ENCODE measurements at regions of chr17 and their contacts with region 1.

Region 1: GRCh38 chr17:8745586-8746500 is 1.2 kb upstream of the CCDC42 start:
- DNase-seq: peak; percentile 70
- H3K4me3 ChIP-seq: peak overlapping the region; percentile 35 to 63 (median 56)
- H3K27ac ChIP-seq: peak overlapping the region; percentile 36 to 58 (median 52)
- H3K4me1 ChIP-seq: peaks cover 0 to 17% (median 8%) of the 10 kb centered on the region in 4 donors
- H3K27me3 ChIP-seq: no peaks in the 10 kb centered on the region
- CTCF ChIP-seq: peak; percentile 72 to 98 (median 95)
- EP300 ChIP-seq: no peak
- POLR2A ChIP-seq: no peak

Region 2: GRCh38 chr17:8409966-8410864 is 335.6 kb before region 1 on chr17:
- in situ Hi-C with region 1: loop called (anchors 5 to 25 kb)
- intact Hi-C with region 1: loop called (anchors 5 kb)
- DNase-seq: peak; percentile 91
- H3K4me3 ChIP-seq: no peak overlapping the region
- H3K27ac ChIP-seq: no peak overlapping the region
- H3K4me1 ChIP-seq: peaks cover 0 to 7% (median 2%) of the 10 kb centered on the region in 4 donors
- H3K27me3 ChIP-seq: peaks cover under 1% of the 10 kb centered on the region
- CTCF ChIP-seq: peak; percentile 84 to 87 (median 86)
- EP300 ChIP-seq: no peak
- POLR2A ChIP-seq: no peak

Region 3: DNA sequence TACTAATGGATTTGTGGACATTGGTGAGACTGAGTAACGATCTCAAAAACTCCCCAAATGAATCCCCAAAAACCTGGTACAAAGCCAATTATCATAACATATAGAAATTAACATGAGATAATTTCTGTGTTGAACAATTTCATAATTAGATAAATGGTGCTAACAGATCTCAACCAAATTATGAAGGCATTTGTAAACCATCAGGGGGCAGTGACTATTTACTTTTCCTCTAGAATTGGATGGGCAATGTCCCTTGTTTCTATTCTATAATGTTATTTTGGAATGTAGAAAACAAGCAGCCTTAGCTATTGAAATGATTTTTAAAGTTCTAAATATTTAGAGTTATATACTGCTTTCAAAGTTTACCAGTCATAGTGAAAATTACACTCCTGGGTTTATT is 173.1 kb before region 1 on chr17:
- in situ Hi-C with region 1: loop called in 1 of 4 experiments (anchors 10 kb)
- intact Hi-C with region 1: no loop called
- DNase-seq: no peak
- H3K4me3 ChIP-seq: no peak overlapping the region
- H3K27ac ChIP-seq: no peak overlapping the region
- H3K4me1 ChIP-seq: no peaks in the 10 kb centered on the region
- H3K27me3 ChIP-seq: no peaks in the 10 kb centered on the region
- CTCF ChIP-seq: peak in 2 of 5 experiments; percentile 10 to 14
- EP300 ChIP-seq: no peak
- POLR2A ChIP-seq: no peak

Region 4: GRCh38 chr17:8698162-8699061 is 47.4 kb before region 1 on chr17:
- in situ Hi-C with region 1: no loop called
- intact Hi-C with region 1: no loop called
- DNase-seq: peak; percentile 15
- H3K4me3 ChIP-seq: peak overlapping the region in 1 of 4 donors; percentile 24
- H3K27ac ChIP-seq: peak overlapping the region; percentile 16 to 52 (median 16)
- H3K4me1 ChIP-seq: peaks cover 0 to 5% (median 4%) of the 10 kb centered on the region in 4 donors
- H3K27me3 ChIP-seq: peaks cover 5% of the 10 kb centered on the region
- CTCF ChIP-seq: no peak
- EP300 ChIP-seq: no peak
- POLR2A ChIP-seq: no peak

Region 5: DNA sequence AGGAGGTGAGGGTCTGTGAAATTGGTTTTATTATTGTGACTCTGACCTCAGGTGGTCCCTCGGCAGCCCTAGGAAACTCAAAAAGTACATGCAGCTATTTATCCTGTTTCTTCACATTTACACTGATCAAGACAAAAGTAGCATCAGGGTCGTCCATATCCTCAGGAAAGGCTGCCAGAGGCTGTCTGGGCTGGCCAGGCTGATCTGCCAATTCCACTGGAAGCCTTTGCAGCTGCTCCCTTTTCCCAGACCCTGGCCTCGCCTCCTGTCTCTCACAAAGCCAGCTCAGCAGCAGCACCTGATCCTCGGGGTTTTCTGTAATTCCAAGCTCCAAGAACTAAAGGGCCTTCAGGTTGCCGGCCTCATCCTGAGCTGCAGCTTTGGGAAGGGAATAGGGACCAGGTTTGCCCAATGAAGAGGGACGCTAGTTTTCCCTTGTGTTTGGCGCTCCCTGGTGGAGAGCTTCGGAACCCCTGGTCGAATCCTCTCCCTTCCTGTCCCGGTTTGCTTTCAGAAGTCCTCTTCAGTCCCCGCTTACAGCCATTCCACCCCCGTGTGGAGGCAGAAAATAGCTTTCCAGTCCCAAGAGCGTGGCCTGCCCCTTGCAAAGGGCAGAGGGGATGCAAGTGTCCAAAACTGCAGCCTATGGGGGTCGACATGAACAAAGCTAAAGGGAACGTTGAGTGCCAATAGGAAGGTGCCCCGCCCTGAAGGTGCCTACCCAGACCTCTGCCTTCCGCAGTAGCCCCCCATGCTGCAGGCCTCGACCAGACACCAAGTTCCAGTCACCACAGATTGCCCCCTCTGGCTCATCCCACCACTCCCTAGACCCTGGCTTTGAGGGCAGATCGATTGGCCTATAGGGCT is 39.9 kb after region 1 on chr17:
- in situ Hi-C with region 1: no loop called
- intact Hi-C with region 1: no loop called
- DNase-seq: peak; percentile 79
- H3K4me3 ChIP-seq: no peak overlapping the region
- H3K27ac ChIP-seq: no peak overlapping the region
- H3K4me1 ChIP-seq: peaks cover 0 to 6% (median 0%) of the 10 kb centered on the region in 4 donors
- H3K27me3 ChIP-seq: no peaks in the 10 kb centered on the region
- CTCF ChIP-seq: peak; percentile 66 to 83 (median 75)
- EP300 ChIP-seq: no peak
- POLR2A ChIP-seq: no peak

Measured in transverse colon (tissue), 4 donors.